ENCODE measurements at regions of chr2 and their contacts with region 1.

Region 1: DNA sequence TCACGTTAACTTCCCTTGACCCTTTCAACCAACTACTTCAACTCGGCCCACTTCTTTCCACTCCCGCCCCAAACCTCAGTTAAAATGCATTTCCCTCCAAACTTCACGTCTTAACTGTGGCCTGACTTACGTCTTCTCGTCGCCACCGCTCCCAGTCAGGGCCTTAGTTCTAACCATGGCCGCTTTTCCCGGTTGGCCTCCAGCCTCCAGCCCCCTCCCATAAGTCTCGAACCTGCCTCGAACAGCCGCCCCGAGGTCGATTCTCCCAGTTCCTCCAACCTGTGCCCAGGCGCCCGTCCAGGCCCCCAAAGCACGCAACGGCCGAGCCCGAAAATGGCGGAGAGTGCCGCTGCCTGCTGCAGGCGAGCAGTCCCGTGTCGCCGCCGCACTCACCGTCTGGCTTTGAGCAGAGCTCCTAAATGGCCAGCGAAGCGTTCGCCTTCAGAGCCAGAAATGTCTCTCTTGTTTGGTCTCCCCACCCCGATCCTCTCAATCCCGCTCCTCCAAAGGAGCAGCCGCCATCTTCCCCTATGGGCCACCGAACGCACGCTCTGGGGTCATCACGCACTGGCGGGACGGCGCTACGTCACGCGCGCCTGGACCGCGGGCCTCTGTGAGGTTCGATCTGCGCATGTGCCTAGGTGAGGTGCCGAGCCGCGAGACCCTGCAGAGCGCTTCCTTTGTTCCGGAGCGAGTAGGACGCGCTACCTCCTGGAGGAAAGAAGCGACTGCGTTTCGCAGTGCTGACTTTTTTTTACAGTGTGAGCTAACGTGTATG is at the start of gene WDR33:
- DNase-seq: peak; percentile 96
- total RNA-seq, gene WDR33: 35.9 TPM

Region 2: GRCh38 chr2:127701193-127701650 is 109.6 kb before region 1 on chr2 and contains the start of gene SFT2D3:
- intact Hi-C with region 1: loop called (anchors 1 kb)
- DNase-seq: peak; percentile 98
- total RNA-seq, gene SFT2D3: 3.1 TPM

Region 3: GRCh38 chr2:127763776-127764175 is 47.0 kb before region 1 on chr2:
- intact Hi-C with region 1: loop called (anchors 5 kb)
- DNase-seq: no peak

Region 4: DNA sequence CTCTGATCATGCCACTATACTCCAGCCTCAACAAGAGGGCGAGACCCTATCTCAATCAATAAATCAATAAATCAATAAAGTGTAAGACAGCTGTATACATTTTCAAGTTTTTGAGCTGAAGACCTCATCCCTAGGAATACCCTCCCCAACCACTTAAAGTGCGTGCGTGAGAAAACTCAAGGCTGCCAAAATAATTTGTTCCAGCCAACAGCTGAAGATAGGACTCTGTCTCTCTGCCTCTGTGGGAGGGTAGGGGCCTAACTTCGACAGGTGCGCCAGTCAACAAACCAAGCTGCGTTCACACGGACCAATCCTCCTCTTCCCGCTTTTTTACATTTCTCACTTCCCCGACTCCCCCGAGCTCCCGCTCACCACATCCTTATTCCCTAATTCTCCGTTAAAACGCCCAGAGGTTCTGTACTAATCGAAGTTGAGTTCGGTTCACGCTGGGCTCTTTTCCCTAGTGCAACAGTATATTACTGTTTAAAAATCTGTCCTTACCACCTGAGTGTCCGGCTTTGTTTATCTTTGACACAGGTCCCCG is 46.5 kb after region 1 on chr2:
- intact Hi-C with region 1: loop called (anchors 5 kb)
- DNase-seq: no peak

Region 5: GRCh38 chr2:127909019-127909418 is 98.2 kb after region 1 on chr2:
- intact Hi-C with region 1: no loop called
- DNase-seq: no peak